Activated CD8-positive, alpha-beta T cell treated with anti-CD3 and anti-CD28 coated beads for 36 hours (primary cell): ENCODE measurements at regions of chr3 and their contacts with region 1.

Region 1: DNA sequence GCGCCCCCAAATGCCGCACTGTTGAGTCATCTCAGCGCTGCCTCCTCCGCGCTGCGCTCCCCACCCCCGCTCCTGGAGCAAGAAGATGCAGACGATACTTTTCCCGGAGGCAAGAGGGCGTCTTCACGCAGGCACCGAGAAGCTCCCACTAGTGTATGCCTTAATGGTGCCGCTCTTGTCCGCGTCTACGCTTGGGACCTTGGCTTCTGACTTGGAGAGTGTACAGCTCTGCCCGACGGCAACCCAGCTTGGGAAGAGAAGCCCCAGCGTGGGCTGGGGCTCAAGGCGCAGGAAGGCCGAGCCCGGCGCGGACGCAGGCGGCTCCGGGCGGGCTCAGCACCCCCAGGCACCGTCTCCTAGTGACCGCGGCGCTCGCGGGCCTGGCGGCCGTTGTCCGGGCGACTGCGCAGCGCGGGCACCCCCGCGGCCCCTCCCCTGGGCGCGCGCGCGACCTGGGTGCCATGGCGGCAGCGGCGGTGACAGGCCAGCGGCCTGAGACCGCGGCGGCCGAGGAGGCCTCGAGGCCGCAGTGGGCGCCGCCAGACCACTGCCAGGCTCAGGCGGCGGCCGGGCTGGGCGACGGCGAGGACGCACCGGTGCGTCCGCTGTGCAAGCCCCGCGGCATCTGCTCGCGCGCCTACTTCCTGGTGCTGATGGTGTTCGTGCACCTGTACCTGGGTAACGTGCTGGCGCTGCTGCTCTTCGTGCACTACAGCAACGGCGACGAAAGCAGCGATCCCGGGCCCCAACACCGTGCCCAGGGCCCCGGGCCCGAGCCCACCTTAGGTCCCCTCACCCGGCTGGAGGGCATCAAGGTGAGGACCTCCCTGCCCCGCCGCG is at the start of gene P4HTM:
- DNase-seq: peak; percentile 92
- ATAC-seq: peak; percentile 84
- H3K4me3 Mint-ChIP-seq: peak within 1 kb of the TSS; percentile 92
- H3K27ac Mint-ChIP-seq: peak within 1 kb of the TSS; percentile 95
- H3K4me1 Mint-ChIP-seq: peaks cover 41% of the 10 kb centered on the region
- H3K27me3 Mint-ChIP-seq: no peaks in the 10 kb centered on the region
- CTCF ChIP-seq: peak; percentile 11
- total RNA-seq, gene P4HTM: 24.8 to 25.0 TPM

Region 2: DNA sequence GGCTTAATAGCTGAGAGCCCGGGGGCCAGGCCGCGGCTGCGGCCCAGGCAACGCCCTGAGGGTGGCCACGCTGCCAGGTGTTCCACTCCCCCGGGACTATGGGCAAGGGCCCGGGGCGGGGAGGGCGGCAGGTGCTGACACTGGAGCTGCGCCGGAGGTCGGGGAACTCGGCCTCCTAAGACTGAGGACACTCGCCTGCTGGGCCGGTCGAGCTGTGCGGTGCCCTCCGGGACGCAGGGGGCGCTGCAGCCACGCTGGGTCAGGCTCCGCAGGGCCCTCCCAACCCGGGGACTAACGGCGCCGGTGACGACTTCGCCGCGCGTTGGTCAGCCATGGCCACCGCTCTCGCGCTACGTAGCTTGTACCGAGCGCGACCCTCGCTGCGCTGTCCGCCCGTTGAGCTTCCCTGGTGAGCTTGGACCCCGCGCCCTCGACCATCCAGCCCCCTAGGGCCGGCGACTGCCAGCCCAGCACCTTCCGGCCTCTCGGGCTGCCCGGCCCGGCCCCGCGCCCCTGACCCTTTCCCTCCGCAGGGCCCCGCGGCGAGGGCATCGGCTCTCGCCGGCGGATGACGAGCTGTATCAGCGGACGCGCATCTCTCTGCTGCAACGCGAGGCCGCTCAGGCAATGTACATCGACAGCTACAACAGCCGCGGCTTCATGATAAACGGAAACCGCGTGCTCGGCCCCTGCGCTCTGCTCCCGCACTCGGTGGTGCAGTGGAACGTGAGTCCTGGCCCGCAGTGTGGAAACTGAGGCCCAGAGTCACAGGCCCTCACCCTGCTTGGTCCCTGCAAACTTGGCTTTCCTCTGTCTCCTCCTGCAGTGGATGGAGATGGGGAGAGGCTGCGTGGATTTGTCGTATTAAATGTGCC is 32.0 kb after region 1 on chr3 and contains the start of gene NDUFAF3:
- CTCF ChIA-PET with region 1: interaction called, 78 read pairs
- POLR2A ChIA-PET with region 1: interaction called, 72 read pairs
- intact Hi-C with region 1: loop called (anchors 5 kb)
- DNase-seq: peak; percentile 95
- ATAC-seq: peak; percentile 74
- H3K4me3 Mint-ChIP-seq: peak within 1 kb of the TSS; percentile 87
- H3K27ac Mint-ChIP-seq: peak within 1 kb of the TSS; percentile 94
- H3K4me1 Mint-ChIP-seq: peaks cover 48% of the 10 kb centered on the region
- H3K27me3 Mint-ChIP-seq: no peaks in the 10 kb centered on the region
- CTCF ChIP-seq: peak; percentile 99
- total RNA-seq, gene NDUFAF3: 90.7 to 95.5 TPM

Region 3: DNA sequence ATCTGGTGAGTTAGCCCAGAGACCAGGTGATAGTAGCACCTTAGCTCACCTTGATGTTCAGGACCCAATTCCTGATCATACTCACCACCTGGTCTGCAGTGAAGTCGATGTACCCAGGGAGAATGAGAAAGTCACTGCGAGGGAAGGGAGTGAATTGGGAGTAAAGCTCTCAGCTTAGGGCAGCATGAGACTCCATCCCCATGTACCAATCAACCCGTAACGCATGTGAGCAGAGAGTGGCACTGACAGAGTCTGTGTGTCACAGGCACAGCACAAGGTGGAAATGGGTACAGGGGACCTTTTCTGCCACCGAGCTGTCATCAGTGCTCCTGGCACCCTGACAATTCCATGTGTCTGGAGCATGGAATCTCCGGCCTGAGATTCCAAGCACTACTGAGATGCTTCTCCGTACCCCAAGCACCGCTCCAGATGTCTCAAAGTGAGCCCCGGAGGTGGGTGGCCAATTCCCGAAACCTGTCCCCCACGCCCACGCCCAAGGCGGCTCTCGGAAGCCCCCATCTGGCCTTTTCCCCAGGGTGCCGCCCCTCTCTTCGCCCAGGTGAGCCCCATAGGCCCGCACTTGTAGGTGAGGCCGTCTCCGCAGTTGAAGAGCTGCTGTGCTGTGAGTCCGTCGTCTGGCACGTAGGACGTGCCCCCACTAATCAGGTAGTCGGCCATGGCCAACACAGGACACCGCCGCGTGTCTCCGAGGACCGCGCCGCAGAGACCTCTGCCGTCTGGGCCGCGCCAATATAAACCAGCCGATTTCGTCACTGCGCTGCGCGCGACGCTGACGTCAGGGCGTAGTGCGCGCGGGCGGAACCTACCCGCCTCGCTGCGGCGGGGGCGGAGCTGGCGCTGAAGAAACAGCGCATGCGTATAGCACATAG is 38.9 kb after region 1 on chr3 and contains the start of gene IMPDH2:
- CTCF ChIA-PET with region 1: interaction called, 64 read pairs
- POLR2A ChIA-PET with region 1: interaction called, 13 read pairs
- intact Hi-C with region 1: loop called (anchors 5 kb)
- DNase-seq: peak; percentile 95
- ATAC-seq: peak; percentile 95
- H3K4me3 Mint-ChIP-seq: peak within 1 kb of the TSS; percentile 88
- H3K27ac Mint-ChIP-seq: peak within 1 kb of the TSS; percentile 92
- H3K4me1 Mint-ChIP-seq: peaks cover 43% of the 10 kb centered on the region
- H3K27me3 Mint-ChIP-seq: no peaks in the 10 kb centered on the region
- CTCF ChIP-seq: no peak
- total RNA-seq, gene IMPDH2: 535 to 557 TPM

Region 4: GRCh38 chr3:49158108-49158709 is 168.2 kb after region 1 on chr3:
- CTCF ChIA-PET with region 1: interaction called, 17 read pairs
- POLR2A ChIA-PET with region 1: interaction called, 4 read pairs
- intact Hi-C with region 1: no loop called
- DNase-seq: peak; percentile 84
- ATAC-seq: peak; percentile 90
- H3K4me3 Mint-ChIP-seq: no peak overlapping the region
- H3K27ac Mint-ChIP-seq: peak overlapping the region; percentile 14
- H3K4me1 Mint-ChIP-seq: peaks cover 19% of the 10 kb centered on the region
- H3K27me3 Mint-ChIP-seq: no peaks in the 10 kb centered on the region
- CTCF ChIP-seq: peak; percentile 58